ENCODE measurements at regions of chr7 and their contacts with region 1.

Region 1: GRCh38 chr7:103344453-103345149 is at the start of gene DNAJC2:
- DNase-seq: peak; percentile 86 to 91
- H3K4me3 ChIP-seq: peak within 1 kb of the TSS; percentile 84
- H3K4me3 Mint-ChIP-seq: peak within 1 kb of the TSS; percentile 100
- H3K27ac Mint-ChIP-seq: peak within 1 kb of the TSS; percentile 99
- H3K4me1 ChIP-seq: peaks cover 20% of the 10 kb centered on the region; the same call in 1 of the 2 replicates
- H3K4me1 Mint-ChIP-seq: peaks cover 21% of the 10 kb centered on the region
- H3K27me3 ChIP-seq: no peaks in the 10 kb centered on the region
- H3K27me3 Mint-ChIP-seq: no peaks in the 10 kb centered on the region
- CTCF ChIP-seq: no peak
- total RNA-seq, gene DNAJC2: 71.6 and 73.0 TPM in 2 replicates

Region 2: DNA sequence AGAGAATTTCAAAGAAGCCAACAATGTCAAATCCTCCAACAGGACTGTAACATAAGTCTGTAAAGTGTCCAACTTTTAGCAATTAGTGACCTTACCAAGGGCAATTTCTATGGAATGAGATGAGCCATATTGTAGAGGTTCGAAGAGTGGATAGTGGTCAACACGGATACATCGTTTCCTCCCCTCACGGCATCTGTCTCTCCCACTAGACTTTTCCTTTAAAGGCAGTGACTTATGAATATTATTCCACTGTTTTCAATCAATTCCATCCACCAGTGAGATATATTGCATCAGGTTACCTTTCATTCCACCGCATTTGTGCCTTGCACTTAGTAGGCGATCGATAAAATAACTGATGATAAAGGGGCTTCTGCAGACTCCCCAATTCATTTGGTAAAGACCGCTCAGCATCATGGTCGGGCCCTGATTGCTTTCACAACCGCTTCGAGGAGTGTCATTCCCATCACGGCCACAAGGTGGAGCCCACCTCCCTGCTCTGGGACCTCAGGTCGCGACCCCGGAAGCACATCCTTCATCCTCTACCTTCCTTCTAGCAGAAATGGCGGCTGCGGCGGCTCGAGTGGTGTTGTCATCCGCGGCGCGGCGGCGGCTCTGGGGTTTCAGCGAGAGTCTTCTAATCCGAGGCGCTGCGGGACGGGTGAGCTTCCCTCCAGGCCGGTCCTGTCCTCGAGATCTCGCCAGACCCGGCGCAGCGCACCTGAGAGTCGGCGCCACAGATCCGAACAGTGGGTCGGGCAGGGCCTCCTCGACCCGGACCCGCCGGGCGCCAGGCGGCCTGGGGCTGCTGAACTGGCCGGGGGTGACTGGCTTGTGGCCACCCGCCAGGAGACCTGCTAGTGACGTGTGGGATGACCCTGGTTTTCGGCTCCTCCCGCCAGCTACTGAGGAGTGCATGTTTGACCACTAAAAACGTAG is 47.4 kb before region 1 on chr7 and contains the start of gene PMPCB:
- CTCF ChIA-PET with region 1: no interaction called
- POLR2A ChIA-PET with region 1: no interaction called
- intact Hi-C with region 1: loop called (anchors 1 kb)
- DNase-seq: peak; percentile 93 to 94
- H3K4me3 ChIP-seq: peak within 1 kb of the TSS; percentile 88
- H3K4me3 Mint-ChIP-seq: peak within 1 kb of the TSS; percentile 82
- H3K27ac Mint-ChIP-seq: peak within 1 kb of the TSS; percentile 76
- H3K4me1 ChIP-seq: peaks cover 4% of the 10 kb centered on the region; the same call in 1 of the 2 replicates
- H3K4me1 Mint-ChIP-seq: no peaks in the 10 kb centered on the region
- H3K27me3 ChIP-seq: no peaks in the 10 kb centered on the region
- H3K27me3 Mint-ChIP-seq: no peaks in the 10 kb centered on the region
- CTCF ChIP-seq: peak; percentile 94 to 96
- total RNA-seq, gene PMPCB: 77.6 and 90.9 TPM in 2 replicates

Region 3: DNA sequence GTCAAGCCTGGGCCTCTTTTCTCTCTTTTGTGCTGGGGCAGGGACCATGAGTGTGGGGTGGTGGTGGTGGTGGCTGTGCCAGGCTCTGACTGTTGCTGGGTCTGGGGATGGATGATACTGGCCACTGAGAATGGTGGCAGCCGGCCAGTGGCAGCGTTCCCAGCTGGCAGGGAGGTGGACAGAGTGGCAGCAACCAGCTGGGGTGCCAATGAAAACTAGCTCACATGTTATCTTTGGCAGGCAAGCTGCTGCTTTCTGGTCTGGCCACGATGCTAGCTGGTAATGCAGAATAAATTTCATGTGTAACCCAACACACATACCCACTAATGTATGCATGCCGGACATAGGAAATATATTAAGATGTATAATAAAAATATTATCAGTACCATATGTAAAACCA is 196.4 kb after region 1 on chr7:
- CTCF ChIA-PET with region 1: no interaction called
- POLR2A ChIA-PET with region 1: no interaction called
- intact Hi-C with region 1: no loop called
- DNase-seq: no peak
- H3K4me3 ChIP-seq: no peak overlapping the region
- H3K4me3 Mint-ChIP-seq: no peak overlapping the region
- H3K27ac Mint-ChIP-seq: no peak overlapping the region
- H3K4me1 ChIP-seq: no peaks in the 10 kb centered on the region
- H3K4me1 Mint-ChIP-seq: no peaks in the 10 kb centered on the region
- H3K27me3 ChIP-seq: no peaks in the 10 kb centered on the region
- H3K27me3 Mint-ChIP-seq: no peaks in the 10 kb centered on the region
- CTCF ChIP-seq: no peak